Activated CD4-positive, alpha-beta T cell treated with anti-CD3 and anti-CD28 coated beads for 36 hours (primary cell): ENCODE measurements at regions of chr16 and their contacts with region 1.

Region 1: GRCh38 chr16:88633684-88634140 is 4.7 kb upstream of the IL17C start:
- DNase-seq: peak; percentile 81
- ATAC-seq: peak; percentile 53
- H3K4me3 Mint-ChIP-seq: peak overlapping the region; percentile 56
- H3K27ac Mint-ChIP-seq: no peak overlapping the region
- H3K4me1 Mint-ChIP-seq: peaks cover 38% of the 10 kb centered on the region
- H3K27me3 Mint-ChIP-seq: peaks cover 16% of the 10 kb centered on the region

Region 2: GRCh38 chr16:88700636-88701482 is 67.1 kb after region 1 on chr16:
- CTCF ChIA-PET with region 1: no interaction called
- POLR2A ChIA-PET with region 1: no interaction called
- intact Hi-C with region 1: loop called in 1 of 2 experiments (anchors 2 kb)
- DNase-seq: peak; percentile 98
- ATAC-seq: peak; percentile 80
- H3K4me3 Mint-ChIP-seq: peak overlapping the region; percentile 92
- H3K27ac Mint-ChIP-seq: peak overlapping the region; percentile 97
- H3K4me1 Mint-ChIP-seq: peaks cover 55% of the 10 kb centered on the region
- H3K27me3 Mint-ChIP-seq: no peaks in the 10 kb centered on the region